ENCODE measurements at regions of chr14 and their contacts with region 1.

Region 1: DNA sequence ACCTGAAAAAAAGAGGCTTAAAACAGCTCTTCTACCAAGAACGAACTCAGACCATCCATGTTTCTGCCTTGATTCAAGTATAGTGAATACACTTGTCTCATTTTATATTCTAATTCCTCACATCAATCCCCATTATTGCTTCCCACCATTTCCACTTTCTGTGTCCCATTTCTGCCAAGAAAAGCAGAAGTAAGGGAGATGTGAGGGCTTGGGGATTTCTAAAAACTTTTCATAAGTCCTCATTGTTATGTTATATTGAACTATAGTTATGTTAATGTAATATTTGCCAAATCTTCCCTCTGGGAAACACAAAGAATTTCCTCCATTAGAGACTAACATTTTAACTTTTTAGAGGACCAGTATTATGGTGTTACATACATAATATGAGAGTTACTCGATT is 48.2 kb upstream of the PSMA6 start:
- DNase-seq: no peak
- H3K4me3 Mint-ChIP-seq: no peak overlapping the region
- H3K27ac Mint-ChIP-seq: no peak overlapping the region
- H3K4me1 Mint-ChIP-seq: peaks cover 35% of the 10 kb centered on the region
- H3K27me3 Mint-ChIP-seq: no peaks in the 10 kb centered on the region

Region 2: DNA sequence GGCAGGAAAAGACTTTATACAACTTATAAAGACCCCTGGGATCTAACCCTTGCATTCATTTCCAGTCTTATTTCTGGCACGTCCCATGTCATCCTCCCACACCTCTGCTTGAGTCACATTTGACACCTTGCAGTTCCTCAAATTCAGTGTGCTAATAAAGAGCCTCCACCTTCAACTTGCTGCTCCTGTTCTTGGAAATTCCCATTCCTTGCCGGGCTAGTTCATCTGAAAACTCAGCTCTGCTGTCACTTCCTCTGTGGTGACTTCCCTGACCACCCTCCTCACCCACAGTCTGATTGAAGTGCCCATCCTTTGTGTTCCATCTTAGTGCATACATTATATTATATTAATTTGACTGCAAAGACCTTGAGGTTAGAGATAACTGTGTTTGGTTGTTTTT is 10.8 kb after region 1 on chr14:
- intact Hi-C with region 1: loop called (anchors 2 kb)
- DNase-seq: peak; percentile 16
- H3K4me3 Mint-ChIP-seq: peak overlapping the region; percentile 51
- H3K27ac Mint-ChIP-seq: peak overlapping the region; percentile 32
- H3K4me1 Mint-ChIP-seq: peaks cover 60% of the 10 kb centered on the region
- H3K27me3 Mint-ChIP-seq: no peaks in the 10 kb centered on the region

Region 3: GRCh38 chr14:35385042-35385839 is 141.3 kb after region 1 on chr14:
- intact Hi-C with region 1: no loop called
- DNase-seq: no peak
- H3K4me3 Mint-ChIP-seq: no peak overlapping the region
- H3K27ac Mint-ChIP-seq: no peak overlapping the region
- H3K4me1 Mint-ChIP-seq: no peaks in the 10 kb centered on the region
- H3K27me3 Mint-ChIP-seq: peaks cover 8% of the 10 kb centered on the region